ENCODE measurements at regions of chr3 and their contacts with region 1.

Region 1: DNA sequence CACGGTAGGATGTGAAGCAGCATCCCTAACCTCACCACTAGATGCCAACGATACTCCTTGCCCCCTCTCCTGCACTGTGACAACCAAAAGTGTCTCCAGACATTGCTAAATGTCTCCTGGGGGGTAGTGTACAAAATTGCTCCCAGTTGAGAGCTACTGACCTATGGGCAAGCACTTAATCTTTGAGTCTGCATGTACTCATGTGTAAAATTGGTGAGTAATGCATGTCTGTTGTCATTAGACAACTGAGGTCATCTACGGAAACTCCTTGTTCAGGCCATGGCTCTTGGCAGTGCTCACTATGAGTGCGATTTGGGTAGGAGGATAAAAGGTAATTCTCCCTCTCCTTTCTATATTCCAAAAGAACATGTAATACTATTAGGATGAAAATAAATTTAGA is 29.2 kb downstream of the PDHB start:
- DNase-seq: peak; percentile 88
- ATAC-seq: peak; percentile 100
- H3K4me3 ChIP-seq: no peak overlapping the region
- H3K27ac ChIP-seq: peak overlapping the region; percentile 62
- H3K4me1 ChIP-seq: peaks cover 16% of the 10 kb centered on the region
- H3K27me3 ChIP-seq: no peaks in the 10 kb centered on the region
- CTCF ChIP-seq: no peak

Region 2: GRCh38 chr3:58349792-58350626 is 54.4 kb before region 1 on chr3:
- CTCF ChIA-PET with region 1: no interaction called
- POLR2A ChIA-PET with region 1: no interaction called
- intact Hi-C with region 1: no loop called
- DNase-seq: peak; percentile 22
- ATAC-seq: no peak
- H3K4me3 ChIP-seq: no peak overlapping the region
- H3K27ac ChIP-seq: no peak overlapping the region
- H3K4me1 ChIP-seq: peaks cover 16% of the 10 kb centered on the region
- H3K27me3 ChIP-seq: no peaks in the 10 kb centered on the region
- CTCF ChIP-seq: no peak

Region 3: GRCh38 chr3:58383904-58384303 is 20.5 kb before region 1 on chr3:
- CTCF ChIA-PET with region 1: no interaction called
- POLR2A ChIA-PET with region 1: interaction called, 5 read pairs
- intact Hi-C with region 1: loop called (anchors 1 kb)
- DNase-seq: peak; percentile 99
- ATAC-seq: peak; percentile 89
- H3K4me3 ChIP-seq: no peak overlapping the region
- H3K27ac ChIP-seq: peak overlapping the region; percentile 92
- H3K4me1 ChIP-seq: peaks cover 42% of the 10 kb centered on the region
- H3K27me3 ChIP-seq: no peaks in the 10 kb centered on the region
- CTCF ChIP-seq: no peak

Region 4: GRCh38 chr3:58463181-58463941 is 59.0 kb after region 1 on chr3:
- CTCF ChIA-PET with region 1: no interaction called
- POLR2A ChIA-PET with region 1: interaction called, 11 read pairs
- intact Hi-C with region 1: no loop called
- DNase-seq: peak; percentile 90
- ATAC-seq: peak; percentile 99
- H3K4me3 ChIP-seq: peak overlapping the region; percentile 32
- H3K27ac ChIP-seq: no peak overlapping the region
- H3K4me1 ChIP-seq: peaks cover 14% of the 10 kb centered on the region
- H3K27me3 ChIP-seq: no peaks in the 10 kb centered on the region
- CTCF ChIP-seq: peak; percentile 98